ENCODE measurements at regions of chr1 and their contacts with region 1.

Region 1: GRCh38 chr1:209674957-209675564 is at the start of gene G0S2:
- DNase-seq: peak; percentile 87 to 96
- ATAC-seq: peak; percentile 83 to 87 (median 85)
- H3K4me3 ChIP-seq: peak within 1 kb of the TSS; percentile 72
- H3K27ac ChIP-seq: peak within 1 kb of the TSS; percentile 89
- H3K4me1 ChIP-seq: peaks cover 37% of the 10 kb centered on the region
- H3K27me3 ChIP-seq: no peaks in the 10 kb centered on the region
- CTCF ChIP-seq: no peak
- total RNA-seq, gene G0S2: 50.0 to 468 (median 92.8) TPM

Region 2: GRCh38 chr1:209607102-209607794 is 67.8 kb before region 1 on chr1:
- intact Hi-C with region 1: no loop called
- DNase-seq: no peak
- ATAC-seq: no peak
- H3K4me3 ChIP-seq: no peak overlapping the region
- H3K27ac ChIP-seq: no peak overlapping the region
- H3K4me1 ChIP-seq: peaks cover 9% of the 10 kb centered on the region
- H3K27me3 ChIP-seq: no peaks in the 10 kb centered on the region
- CTCF ChIP-seq: no peak

Region 3: GRCh38 chr1:209633335-209633997 is 41.6 kb before region 1 on chr1:
- intact Hi-C with region 1: loop called in 1 of 2 experiments (anchors 5 kb)
- DNase-seq: no peak
- ATAC-seq: no peak
- H3K4me3 ChIP-seq: no peak overlapping the region
- H3K27ac ChIP-seq: no peak overlapping the region
- H3K4me1 ChIP-seq: peaks cover 19% of the 10 kb centered on the region
- H3K27me3 ChIP-seq: no peaks in the 10 kb centered on the region
- CTCF ChIP-seq: no peak

Region 4: DNA sequence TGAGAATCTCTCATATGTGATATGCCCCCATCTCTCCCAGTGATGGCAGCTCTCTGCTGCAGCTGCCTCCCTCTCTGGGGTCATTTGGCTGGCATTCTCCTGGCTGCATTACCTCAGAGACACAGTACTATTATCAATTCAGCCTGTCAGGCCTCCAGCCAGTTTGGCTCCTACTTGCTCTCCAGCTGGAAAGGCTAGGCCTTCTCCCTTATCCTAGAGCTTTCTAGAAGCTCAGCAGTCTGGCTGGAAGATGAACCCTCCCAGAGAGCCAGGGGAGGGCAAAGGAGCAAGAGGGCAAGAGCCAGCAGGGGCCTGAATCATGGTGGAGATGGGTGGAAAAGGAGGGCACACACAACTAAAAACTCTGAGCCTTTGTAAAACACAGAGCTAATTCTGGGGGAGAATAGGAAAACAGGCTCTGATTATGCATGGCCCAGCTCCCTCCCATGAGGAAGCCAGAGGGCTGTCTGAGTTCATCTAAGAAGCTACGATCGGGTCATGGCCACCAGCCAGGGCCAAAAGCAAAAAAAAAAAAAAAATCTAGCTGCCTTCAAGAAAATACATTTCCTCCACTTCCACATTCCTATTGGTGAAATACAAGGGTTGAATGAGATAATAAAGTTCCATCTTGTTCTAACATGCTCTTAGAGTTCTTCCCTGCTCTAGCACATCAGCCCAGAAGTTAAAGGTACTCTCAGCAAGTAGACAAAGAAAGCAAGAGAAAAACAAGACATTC is 31.6 kb before region 1 on chr1:
- intact Hi-C with region 1: loop called (anchors 5 kb)
- DNase-seq: no peak
- ATAC-seq: peak; percentile 26 to 55 (median 48)
- H3K4me3 ChIP-seq: no peak overlapping the region
- H3K27ac ChIP-seq: peak overlapping the region; percentile 95
- H3K4me1 ChIP-seq: peaks cover 61% of the 10 kb centered on the region
- H3K27me3 ChIP-seq: no peaks in the 10 kb centered on the region
- CTCF ChIP-seq: no peak

Region 5: DNA sequence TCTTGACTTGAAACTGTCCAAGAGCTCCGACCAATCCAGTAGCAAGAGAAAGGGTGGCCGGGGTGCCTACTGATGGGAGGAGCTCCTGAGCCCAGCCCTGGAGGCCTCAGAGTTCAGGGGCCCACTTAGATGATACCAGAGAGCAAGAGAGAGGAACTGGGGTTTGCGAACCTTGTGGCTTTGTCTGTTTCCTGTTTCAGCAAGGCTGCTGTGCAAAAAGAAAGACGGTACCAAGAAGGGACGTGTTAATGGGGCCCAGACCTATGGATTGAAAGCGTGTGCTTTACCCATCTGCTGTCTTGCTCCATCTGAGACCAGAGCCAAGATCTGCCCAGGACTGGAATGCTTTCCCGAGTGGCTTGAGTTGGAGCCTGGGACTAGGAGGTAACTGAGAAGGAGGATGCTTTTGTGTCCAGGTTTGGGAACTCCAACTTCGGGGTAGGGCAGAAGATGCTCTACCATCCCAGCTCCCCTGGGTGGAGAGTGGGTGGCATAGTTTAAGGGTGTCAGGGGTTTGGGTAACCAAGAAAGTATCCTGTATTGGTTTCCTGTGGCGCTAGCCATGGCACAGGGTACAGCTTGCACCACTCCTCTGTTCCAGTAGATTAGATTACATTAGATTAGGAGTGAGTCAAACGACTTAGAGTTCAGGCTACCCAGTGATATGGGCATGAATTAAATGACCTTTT is 81.0 kb after region 1 on chr1 and contains the start of gene TRAF3IP3:
- intact Hi-C with region 1: no loop called
- DNase-seq: no peak
- ATAC-seq: peak in 2 of 4 donors; percentile 23 to 33
- H3K4me3 ChIP-seq: no peak within 1 kb of the TSS
- H3K27ac ChIP-seq: no peak within 1 kb of the TSS
- H3K4me1 ChIP-seq: no peaks in the 10 kb centered on the region
- H3K27me3 ChIP-seq: no peaks in the 10 kb centered on the region
- CTCF ChIP-seq: no peak
- total RNA-seq, gene TRAF3IP3: 0.84 to 2.0 (median 1.8) TPM

Measured in psoas muscle (tissue), 8 donors.